ENCODE measurements at regions of chr1 and their contacts with region 1.

Region 1: GRCh38 chr1:27284425-27285273 is 37.3 kb upstream of the TMEM222 start:
- DNase-seq: peak; percentile 92
- CTCF ChIP-seq: peak; percentile 80

Region 2: DNA sequence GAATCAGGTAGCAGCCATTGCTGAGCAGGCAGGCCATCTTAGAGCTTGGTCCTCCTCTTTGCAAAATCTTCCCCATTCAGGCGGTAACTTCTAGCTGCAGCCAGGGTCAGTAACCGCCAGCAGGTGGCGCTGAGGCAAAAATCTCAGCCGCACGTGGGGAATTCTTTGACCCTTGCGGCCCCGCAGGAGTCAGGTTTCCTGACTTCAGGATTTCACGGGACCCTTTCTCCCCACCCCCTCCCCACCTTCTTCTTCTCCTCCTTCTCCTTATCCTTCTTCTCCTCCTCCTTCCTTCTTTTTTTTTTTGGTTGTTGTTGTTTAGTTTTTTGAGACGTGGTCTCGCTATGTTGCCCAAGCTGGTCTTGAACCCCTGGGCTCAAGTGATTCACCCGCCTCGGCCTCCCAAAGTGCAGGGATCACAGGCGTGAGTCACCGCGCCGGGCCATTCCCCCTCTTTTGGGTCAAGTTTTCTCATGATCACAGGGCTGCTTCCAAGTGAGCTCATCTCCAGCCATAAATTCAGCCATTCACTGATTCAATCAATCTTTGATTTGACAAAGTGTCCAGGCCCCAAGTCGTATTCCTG is 238.6 kb before region 1 on chr1:
- in situ Hi-C with region 1: no loop called
- DNase-seq: peak; percentile 80
- CTCF ChIP-seq: peak; percentile 95

Region 3: DNA sequence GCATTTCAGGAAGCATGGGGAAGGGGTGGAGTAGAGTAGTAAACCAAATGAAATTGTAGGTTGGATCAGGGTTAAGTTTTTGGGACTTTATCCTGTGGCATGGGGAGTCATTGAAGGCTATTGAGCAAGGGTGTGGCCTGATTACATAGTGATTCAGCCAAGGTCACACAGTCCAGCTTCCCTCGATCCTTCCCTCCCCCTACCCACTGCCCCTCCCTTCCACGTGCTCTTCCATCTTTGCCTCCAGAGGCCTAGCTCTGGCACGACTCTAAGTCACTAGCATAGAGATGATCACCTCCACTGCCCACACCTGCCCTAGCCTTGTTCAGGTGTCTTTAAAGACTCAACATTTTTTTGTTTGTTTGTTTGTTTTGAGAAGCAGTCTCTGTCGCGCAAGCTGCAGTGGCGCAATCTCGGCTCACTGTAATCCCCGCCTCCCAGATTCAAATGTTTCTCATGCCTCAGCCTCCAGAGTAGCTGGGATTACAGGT is 92.6 kb before region 1 on chr1:
- in situ Hi-C with region 1: loop called (anchors 5 kb)
- DNase-seq: no peak
- CTCF ChIP-seq: no peak

Region 4: GRCh38 chr1:27395441-27396195 is 111.0 kb after region 1 on chr1:
- in situ Hi-C with region 1: no loop called
- DNase-seq: peak; percentile 91
- CTCF ChIP-seq: peak; percentile 95

Measured in GM13977 (cell line).